ENCODE measurements at regions of chr21 and their contacts with region 1.

Region 1: DNA sequence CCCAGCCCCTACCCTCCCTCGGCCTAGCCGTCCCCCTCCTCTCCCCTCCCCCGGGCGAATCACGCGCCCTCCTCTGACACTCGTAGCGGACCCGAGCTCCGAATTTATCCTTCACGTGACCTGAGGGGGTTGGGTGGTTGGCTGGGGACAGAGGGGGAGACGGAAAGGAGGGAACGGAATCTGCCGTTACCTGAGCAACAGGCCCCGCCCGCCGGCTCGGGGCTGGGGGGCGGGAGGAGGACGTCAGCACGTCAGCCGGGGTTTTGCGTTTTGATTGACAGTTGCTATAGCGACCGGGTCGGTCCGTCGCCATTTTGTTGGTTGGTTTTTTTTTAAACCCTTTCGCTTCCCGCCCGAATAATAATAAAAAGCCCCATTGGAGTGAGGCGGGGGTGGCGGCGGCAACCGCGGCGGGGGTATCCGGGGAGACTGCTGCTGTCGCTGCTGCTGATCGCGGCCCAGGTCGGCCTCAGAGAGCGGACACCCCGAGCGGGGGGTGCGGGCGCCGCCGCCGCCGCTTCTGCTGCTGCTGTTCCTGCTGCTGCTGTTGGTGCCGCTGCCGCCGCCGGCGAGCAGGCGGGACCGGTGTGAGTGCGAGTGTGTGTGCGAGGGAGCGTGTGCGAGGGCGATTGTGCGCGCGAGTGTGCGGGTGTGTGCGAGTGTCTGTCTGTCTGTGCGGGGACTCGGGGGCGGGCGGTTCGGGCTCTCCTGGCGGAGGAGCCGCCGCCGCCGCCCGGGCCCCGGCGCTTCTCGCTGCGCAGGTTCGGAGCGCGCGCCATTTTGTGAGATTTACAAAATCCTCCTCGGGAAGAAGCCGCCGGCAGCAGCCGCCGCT is at the start of gene DYRK1A:
- DNase-seq: peak; percentile 100
- H3K4me3 ChIP-seq: peak within 1 kb of the TSS; percentile 65
- H3K27ac ChIP-seq: peak within 1 kb of the TSS; percentile 99
- H3K4me1 ChIP-seq: peaks cover 27% of the 10 kb centered on the region
- H3K27me3 ChIP-seq: no peaks in the 10 kb centered on the region
- CTCF ChIP-seq: no peak
- total RNA-seq, gene DYRK1A: 66.4 and 70.5 TPM in 2 replicates

Region 2: DNA sequence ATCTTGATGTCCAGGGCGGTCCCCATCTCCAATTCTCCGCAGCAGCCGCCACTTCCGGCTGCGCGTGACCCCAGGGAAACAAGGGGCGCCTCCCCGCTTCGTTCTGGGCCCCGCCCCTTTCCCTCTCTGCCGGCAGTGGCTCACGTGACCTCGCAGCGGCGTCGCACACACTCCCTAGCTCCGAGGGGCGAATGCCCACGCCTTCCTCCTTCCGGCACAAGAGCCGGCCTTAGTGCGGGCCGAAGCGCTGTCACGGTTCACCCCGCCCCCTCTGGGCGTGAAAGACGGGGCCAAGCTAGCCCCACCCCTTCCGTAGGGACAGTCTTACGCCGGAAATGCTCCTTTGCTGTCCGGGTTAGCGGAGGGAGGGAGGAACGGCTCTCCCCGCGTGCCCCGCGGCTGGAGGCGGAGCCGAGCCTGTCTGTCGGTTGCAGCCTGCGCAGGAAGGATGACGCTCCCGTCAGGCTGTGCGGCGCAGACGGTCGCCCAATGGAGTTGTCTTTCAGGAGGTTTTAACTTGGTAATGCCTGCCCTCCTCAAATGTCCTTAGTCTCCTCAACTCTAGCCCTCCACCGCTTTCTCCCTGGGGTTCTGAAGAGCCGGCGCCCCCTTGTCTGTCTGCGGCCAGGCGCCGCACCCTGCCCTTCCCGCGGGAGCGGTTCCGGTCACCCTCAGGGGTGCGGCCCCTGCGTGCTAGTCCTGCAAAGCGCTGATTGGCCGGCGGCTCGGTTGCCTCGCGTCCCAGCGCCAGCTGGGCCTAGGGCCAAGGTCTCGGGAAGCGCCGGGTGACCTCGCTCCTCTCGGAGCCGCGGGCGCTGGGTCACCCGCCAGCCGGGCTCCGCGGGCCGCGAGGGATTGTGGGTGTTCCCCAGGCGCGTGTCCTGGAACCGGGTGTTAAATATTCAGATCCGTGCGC is 99.2 kb before region 1 on chr21 and contains the start of gene VPS26C:
- CTCF ChIA-PET with region 1: no interaction called
- POLR2A ChIA-PET with region 1: no interaction called
- intact Hi-C with region 1: loop called (anchors 1 kb)
- DNase-seq: peak; percentile 100
- H3K4me3 ChIP-seq: peak within 1 kb of the TSS; percentile 72
- H3K27ac ChIP-seq: peak within 1 kb of the TSS; percentile 98
- H3K4me1 ChIP-seq: peaks cover 9% of the 10 kb centered on the region
- H3K27me3 ChIP-seq: no peaks in the 10 kb centered on the region
- CTCF ChIP-seq: no peak
- total RNA-seq, gene VPS26C: 45.3 and 50.2 TPM in 2 replicates

Region 3: GRCh38 chr21:37398697-37399096 is 32.0 kb after region 1 on chr21:
- CTCF ChIA-PET with region 1: no interaction called
- POLR2A ChIA-PET with region 1: no interaction called
- intact Hi-C with region 1: no loop called
- DNase-seq: no peak
- H3K4me3 ChIP-seq: no peak overlapping the region
- H3K27ac ChIP-seq: no peak overlapping the region
- H3K4me1 ChIP-seq: peaks cover 3% of the 10 kb centered on the region
- H3K27me3 ChIP-seq: no peaks in the 10 kb centered on the region
- CTCF ChIP-seq: no peak

Region 4: DNA sequence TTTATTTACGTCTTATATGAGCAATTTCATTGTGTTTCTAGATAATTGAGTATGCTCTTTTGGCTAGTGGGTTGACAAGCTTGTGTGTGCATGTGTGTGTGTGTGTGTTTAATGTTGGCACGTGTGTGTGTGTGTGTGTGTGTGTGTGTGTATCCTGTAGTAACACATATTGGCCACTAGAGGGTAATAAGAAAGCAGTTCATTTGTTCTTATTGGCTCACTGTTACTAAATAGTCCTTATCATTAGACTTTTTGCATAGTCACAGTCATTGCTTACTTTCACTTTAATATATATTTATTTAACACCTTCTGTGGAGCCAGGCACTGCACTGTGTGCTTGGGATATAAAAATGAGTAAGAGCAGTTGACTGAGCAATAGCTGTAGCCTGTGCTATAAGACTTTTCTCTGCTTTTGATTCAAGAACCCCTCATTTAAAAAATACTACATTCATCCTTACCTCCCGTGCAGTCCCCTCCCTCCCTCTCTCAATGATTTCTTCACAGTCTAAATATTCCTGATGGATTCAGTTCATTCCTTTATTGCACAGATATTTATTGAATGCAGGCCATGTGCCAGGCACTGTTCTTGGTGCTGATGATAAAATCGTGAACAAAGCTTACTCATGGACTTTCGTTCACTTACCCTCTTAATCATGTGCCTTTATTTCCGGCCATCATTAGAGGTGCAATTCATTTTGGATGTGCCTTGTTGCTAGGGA is 96.5 kb after region 1 on chr21:
- CTCF ChIA-PET with region 1: no interaction called
- POLR2A ChIA-PET with region 1: interaction called, 3 read pairs
- intact Hi-C with region 1: loop called (anchors 5 kb)
- DNase-seq: peak; percentile 68
- H3K4me3 ChIP-seq: peak overlapping the region; percentile 32
- H3K27ac ChIP-seq: peak overlapping the region; percentile 34
- H3K4me1 ChIP-seq: peaks cover 37% of the 10 kb centered on the region
- H3K27me3 ChIP-seq: no peaks in the 10 kb centered on the region
- CTCF ChIP-seq: peak; percentile 75

Region 5: GRCh38 chr21:37532868-37533780 is 166.4 kb after region 1 on chr21:
- CTCF ChIA-PET with region 1: no interaction called
- POLR2A ChIA-PET with region 1: no interaction called
- intact Hi-C with region 1: no loop called
- DNase-seq: peak; percentile 24
- H3K4me3 ChIP-seq: no peak overlapping the region
- H3K27ac ChIP-seq: no peak overlapping the region
- H3K4me1 ChIP-seq: no peaks in the 10 kb centered on the region
- H3K27me3 ChIP-seq: no peaks in the 10 kb centered on the region
- CTCF ChIP-seq: no peak

Region 6: GRCh38 chr21:37563641-37564340 is 197.1 kb after region 1 on chr21:
- CTCF ChIA-PET with region 1: no interaction called
- POLR2A ChIA-PET with region 1: no interaction called
- intact Hi-C with region 1: loop called (anchors 10 kb)
- DNase-seq: peak; percentile 97
- H3K4me3 ChIP-seq: peak overlapping the region; percentile 56
- H3K27ac ChIP-seq: peak overlapping the region; percentile 86
- H3K4me1 ChIP-seq: peaks cover 12% of the 10 kb centered on the region
- H3K27me3 ChIP-seq: no peaks in the 10 kb centered on the region
- CTCF ChIP-seq: peak; percentile 57

Region 7: GRCh38 chr21:37958537-37958936 is 591.8 kb after region 1 on chr21:
- CTCF ChIA-PET with region 1: no interaction called
- POLR2A ChIA-PET with region 1: no interaction called
- intact Hi-C with region 1: no loop called
- DNase-seq: no peak
- H3K4me3 ChIP-seq: no peak overlapping the region
- H3K27ac ChIP-seq: no peak overlapping the region
- H3K4me1 ChIP-seq: no peaks in the 10 kb centered on the region
- H3K27me3 ChIP-seq: peaks cover 65% of the 10 kb centered on the region
- CTCF ChIP-seq: no peak

Measured in A673 (cell line).